ENCODE measurements at regions of chr3 and their contacts with region 1.

Region 1: GRCh38 chr3:77038468-77038929 is 1.4 kb upstream of the ROBO2 start:
- DNase-seq: peak; percentile 35 to 79 (median 44)
- ATAC-seq: peak; percentile 92
- H3K4me3 ChIP-seq: peak overlapping the region; percentile 48
- H3K27ac ChIP-seq: no peak overlapping the region
- H3K4me1 ChIP-seq: peaks cover 0 to 5% of the 10 kb centered on the region in 2 experiments; a peak in 2 of 5 replicates
- H3K27me3 ChIP-seq: no peaks in the 10 kb centered on the region; a peak in 1 of 5 replicates
- CTCF ChIP-seq: peak; percentile 35 to 73 (median 56); a peak in 4 of 6 replicates
- EP300 ChIP-seq: no peak
- POLR2A ChIP-seq: no peak
- RAD21 ChIP-seq: peak; percentile 63 to 66

Region 2: DNA sequence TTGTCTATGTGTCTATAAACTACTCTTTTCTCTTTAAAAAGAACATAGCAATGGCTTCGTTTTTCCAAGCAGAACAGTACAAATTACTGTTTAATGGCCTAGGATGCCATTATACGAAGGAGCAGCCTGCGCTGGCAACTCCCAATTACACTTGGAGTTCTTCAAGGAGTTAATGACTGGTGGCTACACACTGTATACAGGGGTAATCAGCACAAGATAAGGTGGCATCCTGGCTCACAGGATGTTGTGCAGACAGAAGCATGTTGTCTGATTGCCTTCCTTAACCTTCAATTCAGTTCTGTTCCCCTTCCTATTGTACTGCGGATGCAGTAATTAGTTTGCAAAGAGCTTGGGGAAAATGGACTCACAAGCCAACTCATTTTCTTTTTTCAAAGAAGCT is 249.3 kb before region 1 on chr3:
- CTCF ChIA-PET with region 1: no interaction called
- POLR2A ChIA-PET with region 1: no interaction called
- in situ Hi-C with region 1: no loop called
- intact Hi-C with region 1: no loop called
- DNase-seq: no peak
- ATAC-seq: no peak
- H3K4me3 ChIP-seq: no peak overlapping the region
- H3K27ac ChIP-seq: no peak overlapping the region
- H3K4me1 ChIP-seq: no peaks in the 10 kb centered on the region
- H3K27me3 ChIP-seq: no peaks in the 10 kb centered on the region
- CTCF ChIP-seq: no peak
- EP300 ChIP-seq: no peak
- POLR2A ChIP-seq: no peak
- RAD21 ChIP-seq: no peak

Region 3: GRCh38 chr3:77158730-77159581 is 120.5 kb after region 1 on chr3:
- CTCF ChIA-PET with region 1: no interaction called
- POLR2A ChIA-PET with region 1: interaction called, 3 read pairs
- in situ Hi-C with region 1: no loop called
- intact Hi-C with region 1: loop called (anchors 10 kb)
- DNase-seq: peak in 1 of 4 experiments; percentile 20
- ATAC-seq: peak; percentile 80
- H3K4me3 ChIP-seq: no peak overlapping the region
- H3K27ac ChIP-seq: no peak overlapping the region
- H3K4me1 ChIP-seq: peaks cover 0 to 4% of the 10 kb centered on the region in 2 experiments; a peak in 1 of 5 replicates
- H3K27me3 ChIP-seq: no peaks in the 10 kb centered on the region
- CTCF ChIP-seq: peak; percentile 25 to 30 (median 30); a peak in 3 of 6 replicates
- EP300 ChIP-seq: no peak
- POLR2A ChIP-seq: no peak
- RAD21 ChIP-seq: no peak

Region 4: GRCh38 chr3:77254967-77255831 is 216.7 kb after region 1 on chr3:
- CTCF ChIA-PET with region 1: interaction called, 25 read pairs
- POLR2A ChIA-PET with region 1: no interaction called
- in situ Hi-C with region 1: loop called (anchors 5 kb)
- intact Hi-C with region 1: loop called (anchors 1 kb)
- DNase-seq: peak; percentile 42 to 73 (median 46)
- ATAC-seq: peak; percentile 85
- H3K4me3 ChIP-seq: no peak overlapping the region
- H3K27ac ChIP-seq: no peak overlapping the region
- H3K4me1 ChIP-seq: no peaks in the 10 kb centered on the region; a peak in 1 of 5 replicates
- H3K27me3 ChIP-seq: no peaks in the 10 kb centered on the region
- CTCF ChIP-seq: peak; percentile 45 to 68 (median 57); a peak in 5 of 6 replicates
- EP300 ChIP-seq: no peak
- POLR2A ChIP-seq: no peak
- RAD21 ChIP-seq: peak; percentile 70 to 73

Region 5: DNA sequence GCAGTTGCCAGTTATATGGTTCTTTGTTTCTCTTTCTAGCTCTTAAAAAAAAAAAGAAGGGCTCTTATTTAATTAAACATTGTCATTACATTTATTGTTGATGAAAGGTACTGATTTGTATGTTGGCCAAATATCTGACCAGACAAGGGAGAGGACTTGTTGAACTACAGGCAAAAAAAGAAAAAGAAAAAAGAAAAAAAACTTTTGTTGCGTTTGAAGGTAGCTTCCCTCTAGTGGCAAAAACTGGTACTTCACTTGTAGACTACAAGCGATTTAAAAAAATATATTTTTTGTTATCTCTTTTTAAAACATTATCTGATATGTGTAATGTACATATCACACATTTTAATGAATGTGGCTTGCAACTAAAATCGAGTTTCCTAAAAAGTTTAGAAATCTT is 282.0 kb after region 1 on chr3:
- CTCF ChIA-PET with region 1: no interaction called
- POLR2A ChIA-PET with region 1: no interaction called
- in situ Hi-C with region 1: no loop called
- intact Hi-C with region 1: loop called (anchors 1 kb)
- DNase-seq: peak; percentile 2 to 43 (median 6)
- ATAC-seq: no peak
- H3K4me3 ChIP-seq: no peak overlapping the region
- H3K27ac ChIP-seq: no peak overlapping the region
- H3K4me1 ChIP-seq: no peaks in the 10 kb centered on the region
- H3K27me3 ChIP-seq: no peaks in the 10 kb centered on the region
- CTCF ChIP-seq: peak; percentile 8 to 46 (median 29); a peak in 3 of 6 replicates
- EP300 ChIP-seq: no peak
- POLR2A ChIP-seq: no peak
- RAD21 ChIP-seq: no peak

Region 6: GRCh38 chr3:77571971-77572715 is 533.6 kb after region 1 on chr3:
- CTCF ChIA-PET with region 1: no interaction called
- POLR2A ChIA-PET with region 1: no interaction called
- in situ Hi-C with region 1: no loop called
- intact Hi-C with region 1: no loop called
- DNase-seq: no peak
- ATAC-seq: no peak
- H3K4me3 ChIP-seq: no peak overlapping the region
- H3K27ac ChIP-seq: no peak overlapping the region
- H3K4me1 ChIP-seq: no peaks in the 10 kb centered on the region
- H3K27me3 ChIP-seq: no peaks in the 10 kb centered on the region
- CTCF ChIP-seq: no peak
- EP300 ChIP-seq: no peak
- POLR2A ChIP-seq: no peak
- RAD21 ChIP-seq: no peak

Region 7: DNA sequence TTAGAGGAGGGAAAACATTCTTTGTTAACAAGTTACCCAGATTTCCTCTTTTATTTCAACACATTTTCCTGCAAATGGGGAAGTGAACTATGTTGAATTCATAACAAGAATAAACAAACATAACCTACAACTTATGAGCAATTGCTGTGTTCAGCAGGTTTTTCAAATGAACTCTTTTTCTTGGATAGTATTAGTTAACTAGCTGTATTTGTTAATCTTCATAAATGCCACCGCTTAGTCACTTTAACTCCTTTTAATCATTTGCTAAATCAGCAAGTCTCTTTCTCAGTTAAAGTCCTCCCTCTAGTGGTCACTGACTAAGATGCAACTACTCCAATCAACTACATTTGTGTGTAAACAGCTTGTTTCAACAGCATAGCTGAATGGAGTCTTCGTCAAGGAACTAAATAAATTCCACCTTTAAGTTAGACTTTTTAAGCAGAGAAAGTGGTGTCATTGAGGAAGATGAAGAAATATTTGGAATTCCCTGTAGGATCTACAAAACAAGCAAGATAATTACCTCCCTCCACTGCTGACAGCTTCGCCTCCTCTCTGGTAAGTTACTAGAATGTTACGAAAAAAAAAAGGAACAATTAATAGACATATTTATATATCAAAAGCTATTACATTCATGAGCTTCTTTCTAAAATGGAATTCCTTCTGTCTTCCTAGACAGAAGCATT is 1607.3 kb after region 1 on chr3:
- CTCF ChIA-PET with region 1: no interaction called
- POLR2A ChIA-PET with region 1: no interaction called
- in situ Hi-C with region 1: no loop called
- intact Hi-C with region 1: loop called (anchors 5 kb)
- DNase-seq: peak; percentile 17 to 54 (median 34)
- ATAC-seq: no peak
- H3K4me3 ChIP-seq: no peak overlapping the region
- H3K27ac ChIP-seq: no peak overlapping the region
- H3K4me1 ChIP-seq: no peaks in the 10 kb centered on the region
- H3K27me3 ChIP-seq: no peaks in the 10 kb centered on the region
- CTCF ChIP-seq: peak in 2 of 3 experiments; percentile 55 to 64; a peak in 4 of 6 replicates
- EP300 ChIP-seq: no peak
- POLR2A ChIP-seq: no peak
- RAD21 ChIP-seq: peak; percentile 61 to 77

Measured in K562 (cell line).